Heart right ventricle (tissue), 16 donors: ENCODE measurements at regions of chrX and their contacts with region 1.

Region 1: DNA sequence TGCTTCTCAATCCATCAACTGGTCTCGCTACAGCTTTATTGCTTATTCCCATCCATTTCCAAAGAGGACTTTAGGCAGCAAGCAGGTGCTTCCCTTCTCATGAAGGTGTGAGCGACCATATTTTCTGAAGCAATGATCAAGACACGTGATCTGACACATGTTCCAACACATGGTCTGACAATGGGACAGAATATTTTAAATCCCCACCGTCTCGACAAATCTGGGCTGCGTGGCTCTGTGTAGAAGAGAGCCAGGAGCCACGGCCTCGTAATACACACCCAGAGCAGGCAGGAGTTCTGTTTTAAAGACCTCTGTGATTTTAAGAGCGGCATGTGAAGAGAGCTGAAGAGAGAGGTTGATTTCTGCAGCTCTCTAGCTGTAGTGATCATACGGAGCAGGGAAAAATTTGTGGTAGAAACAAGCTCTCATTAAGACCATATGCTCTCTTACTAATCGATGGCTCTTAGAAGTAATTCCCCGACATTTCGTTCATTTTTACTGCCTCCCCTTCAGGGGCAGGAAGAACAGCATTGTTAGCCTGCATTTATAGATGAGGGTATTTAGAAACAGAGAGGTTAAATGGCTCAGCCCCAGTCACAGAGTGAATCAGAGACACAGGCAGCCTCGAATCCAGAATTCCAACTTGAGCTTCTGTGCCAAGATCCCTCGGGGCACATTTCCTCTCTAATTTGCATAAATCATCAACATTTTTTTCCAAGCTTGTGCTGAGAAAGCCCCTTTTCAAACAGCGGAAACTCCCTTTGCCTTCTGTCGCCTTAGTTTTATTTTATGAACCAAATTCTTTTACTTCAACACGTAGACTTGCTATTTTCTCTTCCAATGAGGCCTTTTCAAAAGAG is 91.0 kb upstream of the BCOR start:
- DNase-seq: no peak
- ATAC-seq: no peak
- H3K4me3 ChIP-seq: no peak overlapping the region
- H3K27ac ChIP-seq: no peak overlapping the region
- H3K4me1 ChIP-seq: no peaks in the 10 kb centered on the region
- H3K27me3 ChIP-seq: no peaks in the 10 kb centered on the region
- CTCF ChIP-seq: no peak

Region 2: DNA sequence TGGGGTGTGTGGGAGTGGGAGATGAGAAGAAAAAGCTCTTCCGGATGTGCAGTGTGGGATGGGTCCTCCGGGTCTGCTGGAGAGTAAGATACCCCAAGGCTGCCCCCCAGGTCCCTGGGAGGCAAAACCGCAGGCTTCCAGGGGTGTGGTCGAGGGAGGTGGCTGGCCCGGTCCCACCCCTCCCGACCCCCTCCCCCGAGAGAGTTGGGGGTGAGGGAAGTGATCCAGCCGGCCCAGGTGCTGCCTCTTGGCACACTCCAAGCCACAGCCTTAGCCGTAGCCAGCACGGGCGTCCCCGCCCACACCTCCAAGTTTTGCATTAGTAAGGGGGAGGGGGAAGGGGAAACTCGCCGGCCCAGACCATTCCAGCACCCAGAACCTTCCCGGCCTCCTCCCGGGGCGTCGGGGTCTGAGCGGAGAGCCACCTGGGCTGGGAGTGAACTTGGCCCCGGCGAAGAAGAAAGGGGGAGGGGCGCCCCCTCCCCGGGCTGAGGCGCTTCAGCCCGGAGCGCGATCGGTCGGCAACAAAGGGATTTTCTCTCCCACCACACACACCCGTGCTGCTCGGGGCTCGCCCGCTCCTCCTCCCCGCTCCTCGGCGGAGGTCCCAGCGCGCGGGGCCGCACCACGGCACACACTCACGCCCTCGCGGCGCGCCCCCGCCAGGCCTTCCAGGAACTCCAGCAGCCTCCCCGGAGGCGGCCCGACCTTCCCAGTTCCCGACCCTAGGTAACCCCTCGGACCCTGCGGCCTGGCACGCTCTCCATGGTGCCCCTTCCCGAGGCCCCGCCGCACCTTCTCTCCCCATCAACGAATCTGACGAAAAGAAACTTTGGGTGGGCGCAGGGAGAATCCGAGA is 105.5 kb before region 1 on chrX:
- intact Hi-C with region 1: no loop called
- DNase-seq: peak in 1 of 2 donors; percentile 35
- ATAC-seq: peak; percentile 20 to 59 (median 50)
- H3K4me3 ChIP-seq: peak overlapping the region; percentile 23 to 56 (median 42)
- H3K27ac ChIP-seq: peak overlapping the region in 1 of 10 donors; percentile 16
- H3K4me1 ChIP-seq: peaks cover 0 to 69% (median 35%) of the 10 kb centered on the region in 9 donors
- H3K27me3 ChIP-seq: peaks cover 0 to 80% (median 0%) of the 10 kb centered on the region in 7 donors
- CTCF ChIP-seq: no peak

Region 3: DNA sequence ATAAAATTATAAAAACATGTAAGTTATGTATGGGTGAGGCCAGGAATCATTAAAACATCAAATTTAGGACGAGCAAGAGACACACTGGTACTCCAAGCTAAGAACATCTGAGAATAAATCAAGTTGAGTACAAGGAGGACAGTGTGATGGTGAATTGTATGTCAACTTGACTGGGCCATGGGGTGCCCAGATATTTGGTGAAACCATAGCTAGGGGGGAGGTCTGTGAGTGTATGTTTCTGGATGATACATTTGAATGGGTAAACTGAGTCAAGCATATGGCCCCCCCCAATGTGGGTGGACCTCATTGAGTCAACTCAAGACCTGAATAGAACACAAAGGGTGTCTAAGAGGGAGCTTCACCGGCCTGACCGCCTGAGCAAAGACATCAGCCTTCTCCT is 24.3 kb after region 1 on chrX:
- intact Hi-C with region 1: no loop called
- DNase-seq: no peak
- ATAC-seq: no peak
- H3K4me3 ChIP-seq: no peak overlapping the region
- H3K27ac ChIP-seq: no peak overlapping the region
- H3K4me1 ChIP-seq: no peaks in the 10 kb centered on the region
- H3K27me3 ChIP-seq: no peaks in the 10 kb centered on the region
- CTCF ChIP-seq: no peak

Region 4: GRCh38 chrX:40244980-40245379 is 56.2 kb after region 1 on chrX:
- intact Hi-C with region 1: loop called in 2 of 10 experiments (anchors 10 kb)
- DNase-seq: no peak
- ATAC-seq: peak in 7 of 8 donors; percentile 27 to 77 (median 64)
- H3K4me3 ChIP-seq: peak overlapping the region in 5 of 10 donors; percentile 15 to 27 (median 19)
- H3K27ac ChIP-seq: peak overlapping the region in 2 of 10 donors; percentile 7 to 28
- H3K4me1 ChIP-seq: peaks cover 0 to 11% (median 2%) of the 10 kb centered on the region in 9 donors
- H3K27me3 ChIP-seq: peaks cover 0 to 13% (median 0%) of the 10 kb centered on the region in 7 donors
- CTCF ChIP-seq: no peak

Region 5: GRCh38 chrX:40253771-40254170 is 65.0 kb after region 1 on chrX:
- intact Hi-C with region 1: loop called in 2 of 10 experiments (anchors 10 kb)
- DNase-seq: no peak
- ATAC-seq: no peak
- H3K4me3 ChIP-seq: no peak overlapping the region
- H3K27ac ChIP-seq: no peak overlapping the region
- H3K4me1 ChIP-seq: no peaks in the 10 kb centered on the region
- H3K27me3 ChIP-seq: peaks cover 0 to 3% (median 0%) of the 10 kb centered on the region in 7 donors
- CTCF ChIP-seq: no peak

Region 6: GRCh38 chrX:40266490-40267333 is 77.9 kb after region 1 on chrX:
- intact Hi-C with region 1: no loop called
- DNase-seq: peak; percentile 64 to 70
- ATAC-seq: peak; percentile 85 to 95 (median 92)
- H3K4me3 ChIP-seq: peak overlapping the region; percentile 25 to 61 (median 52)
- H3K27ac ChIP-seq: peak overlapping the region in 9 of 10 donors; percentile 65 to 83 (median 77)
- H3K4me1 ChIP-seq: peaks cover 0 to 39% (median 8%) of the 10 kb centered on the region in 9 donors
- H3K27me3 ChIP-seq: peaks cover 0 to 32% (median 0%) of the 10 kb centered on the region in 7 donors
- CTCF ChIP-seq: peak; percentile 38 to 81 (median 63)

Region 7: GRCh38 chrX:40326186-40326965 is 137.6 kb after region 1 on chrX:
- intact Hi-C with region 1: no loop called
- DNase-seq: no peak
- ATAC-seq: no peak
- H3K4me3 ChIP-seq: no peak overlapping the region
- H3K27ac ChIP-seq: no peak overlapping the region
- H3K4me1 ChIP-seq: no peaks in the 10 kb centered on the region
- H3K27me3 ChIP-seq: peaks cover 0 to 31% (median 0%) of the 10 kb centered on the region in 7 donors
- CTCF ChIP-seq: no peak